K562 (cell line): ENCODE measurements at regions of chrX and their contacts with region 1.

Region 1: GRCh38 chrX:8815464-8816065 is 14.4 kb upstream of the FAM9A start:
- DNase-seq: peak; percentile 52 to 69 (median 60)
- ATAC-seq: peak; percentile 81
- H3K4me3 ChIP-seq: no peak overlapping the region
- H3K27ac ChIP-seq: no peak overlapping the region
- H3K4me1 ChIP-seq: no peaks in the 10 kb centered on the region
- H3K27me3 ChIP-seq: no peaks in the 10 kb centered on the region
- CTCF ChIP-seq: peak; percentile 54 to 63 (median 59); a peak in 5 of 6 replicates
- EP300 ChIP-seq: no peak
- POLR2A ChIP-seq: no peak
- RAD21 ChIP-seq: peak; percentile 36 to 48; a peak in 3 of 4 replicates

Region 2: GRCh38 chrX:7996414-7996813 is 819.2 kb before region 1 on chrX:
- CTCF ChIA-PET with region 1: no interaction called
- POLR2A ChIA-PET with region 1: no interaction called
- in situ Hi-C with region 1: no loop called
- intact Hi-C with region 1: loop called (anchors 1 kb)
- DNase-seq: peak; percentile 8 to 43 (median 12)
- ATAC-seq: peak; percentile 76
- H3K4me3 ChIP-seq: no peak overlapping the region
- H3K27ac ChIP-seq: no peak overlapping the region
- H3K4me1 ChIP-seq: no peaks in the 10 kb centered on the region
- H3K27me3 ChIP-seq: no peaks in the 10 kb centered on the region
- CTCF ChIP-seq: peak; percentile 27 to 64 (median 40); a peak in 3 of 6 replicates
- EP300 ChIP-seq: no peak
- POLR2A ChIP-seq: no peak
- RAD21 ChIP-seq: peak; percentile 55 to 60

Region 3: GRCh38 chrX:8738588-8739189 is 76.9 kb before region 1 on chrX:
- CTCF ChIA-PET with region 1: no interaction called
- POLR2A ChIA-PET with region 1: no interaction called
- in situ Hi-C with region 1: no loop called
- intact Hi-C with region 1: no loop called
- DNase-seq: peak; percentile 8 to 48 (median 9)
- ATAC-seq: peak; percentile 54; the same call in 2 of the 3 replicates
- H3K4me3 ChIP-seq: no peak overlapping the region
- H3K27ac ChIP-seq: no peak overlapping the region
- H3K4me1 ChIP-seq: no peaks in the 10 kb centered on the region
- H3K27me3 ChIP-seq: no peaks in the 10 kb centered on the region
- CTCF ChIP-seq: peak; percentile 51 to 64 (median 52)
- EP300 ChIP-seq: no peak
- POLR2A ChIP-seq: no peak
- RAD21 ChIP-seq: peak; percentile 49 to 62

Region 4: GRCh38 chrX:8748855-8749254 is 66.7 kb before region 1 on chrX:
- CTCF ChIA-PET with region 1: interaction called, 4 read pairs
- POLR2A ChIA-PET with region 1: no interaction called
- in situ Hi-C with region 1: no loop called
- intact Hi-C with region 1: loop called (anchors 1 kb)
- DNase-seq: peak; percentile 12 to 22 (median 16)
- ATAC-seq: peak; percentile 77
- H3K4me3 ChIP-seq: no peak overlapping the region
- H3K27ac ChIP-seq: no peak overlapping the region
- H3K4me1 ChIP-seq: no peaks in the 10 kb centered on the region
- H3K27me3 ChIP-seq: no peaks in the 10 kb centered on the region
- CTCF ChIP-seq: peak; percentile 35 to 43 (median 42); a peak in 3 of 6 replicates
- EP300 ChIP-seq: no peak
- POLR2A ChIP-seq: no peak
- RAD21 ChIP-seq: 0 out of 4 replicates have a peak, but pooled peaks of 1 of the 2 experiments have one; percentile 30

Region 5: DNA sequence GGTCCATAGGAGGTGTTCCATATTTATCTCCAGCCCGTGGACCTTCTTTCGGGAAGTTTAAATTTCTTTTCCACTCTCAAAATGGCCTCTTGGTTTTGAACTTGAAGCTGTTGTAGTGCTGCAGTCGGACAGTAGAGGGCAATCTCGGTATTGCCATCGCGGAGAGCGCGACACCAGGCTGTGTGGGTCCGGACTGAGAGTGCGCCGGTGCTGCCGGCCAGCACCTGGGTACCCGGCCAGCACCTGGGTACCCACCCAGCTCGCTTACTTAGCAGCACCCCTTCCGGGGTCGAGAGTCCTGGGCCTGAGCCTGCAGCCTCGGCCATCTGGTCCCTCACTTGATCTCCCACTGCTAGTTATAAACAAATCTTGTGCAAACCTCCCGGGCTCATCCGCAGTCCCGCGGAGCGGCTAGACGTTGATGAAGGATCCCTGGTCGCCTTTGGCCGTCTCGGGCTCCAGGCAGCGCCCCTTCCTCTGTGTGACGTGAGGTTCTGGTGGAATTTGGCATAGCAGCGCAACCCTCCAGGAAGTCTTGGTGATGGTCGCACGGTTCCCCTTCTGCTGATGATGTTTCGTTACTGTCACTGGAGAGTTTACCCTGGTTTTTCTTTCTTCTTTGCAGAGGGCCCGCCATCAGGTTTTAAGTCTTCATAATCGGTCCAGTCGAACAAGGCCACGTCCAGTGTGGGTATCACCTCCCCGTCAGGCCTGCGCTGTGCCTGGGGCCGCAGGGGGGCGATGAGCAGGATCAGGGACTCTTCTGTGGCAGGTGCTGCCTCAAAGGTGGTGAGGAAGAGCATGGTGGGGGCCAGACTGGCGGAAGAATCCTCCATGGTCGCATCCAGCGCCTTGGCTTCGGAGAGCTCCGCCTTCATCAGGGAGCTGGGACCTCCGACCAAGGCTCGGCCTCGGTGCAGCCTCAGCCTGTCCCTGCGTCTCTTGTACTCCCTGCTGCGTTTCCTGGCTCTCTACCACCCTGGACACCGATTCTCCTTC is 32.2 kb before region 1 on chrX:
- CTCF ChIA-PET with region 1: no interaction called
- POLR2A ChIA-PET with region 1: no interaction called
- in situ Hi-C with region 1: no loop called
- intact Hi-C with region 1: loop called (anchors 1 kb)
- DNase-seq: peak; percentile 22 to 52 (median 24)
- ATAC-seq: peak; percentile 92
- H3K4me3 ChIP-seq: no peak overlapping the region
- H3K27ac ChIP-seq: no peak overlapping the region
- H3K4me1 ChIP-seq: peaks cover 0 to 5% of the 10 kb centered on the region in 2 experiments; a peak in 2 of 5 replicates
- H3K27me3 ChIP-seq: no peaks in the 10 kb centered on the region; a peak in 1 of 5 replicates
- CTCF ChIP-seq: peak; percentile 59 to 74 (median 59)
- EP300 ChIP-seq: no peak
- POLR2A ChIP-seq: no peak
- RAD21 ChIP-seq: peak in 1 of 2 experiments; percentile 47; a peak in 3 of 4 replicates

Region 6: GRCh38 chrX:8841911-8842310 is 26.3 kb after region 1 on chrX:
- CTCF ChIA-PET with region 1: no interaction called
- POLR2A ChIA-PET with region 1: no interaction called
- in situ Hi-C with region 1: no loop called
- intact Hi-C with region 1: no loop called
- DNase-seq: no peak
- ATAC-seq: no peak
- H3K4me3 ChIP-seq: no peak overlapping the region
- H3K27ac ChIP-seq: no peak overlapping the region
- H3K4me1 ChIP-seq: no peaks in the 10 kb centered on the region
- H3K27me3 ChIP-seq: no peaks in the 10 kb centered on the region; a peak in 1 of 5 replicates
- CTCF ChIP-seq: no peak
- EP300 ChIP-seq: no peak
- POLR2A ChIP-seq: no peak
- RAD21 ChIP-seq: no peak

Region 7: GRCh38 chrX:9966775-9967408 is 1151.3 kb after region 1 on chrX and contains the start of gene CLDN34:
- CTCF ChIA-PET with region 1: interaction called, 3 read pairs
- POLR2A ChIA-PET with region 1: no interaction called
- in situ Hi-C with region 1: no loop called
- intact Hi-C with region 1: loop called (anchors 10 kb)
- DNase-seq: peak; percentile 10 to 31 (median 13)
- ATAC-seq: peak; percentile 51; the same call in 2 of the 3 replicates
- H3K4me3 ChIP-seq: no peak within 1 kb of the TSS
- H3K27ac ChIP-seq: no peak within 1 kb of the TSS
- H3K4me1 ChIP-seq: no peaks in the 10 kb centered on the region
- H3K27me3 ChIP-seq: peaks cover 0 to 10% of the 10 kb centered on the region in 2 experiments; a peak in 2 of 5 replicates
- CTCF ChIP-seq: peak; percentile 36 to 51 (median 44); a peak in 4 of 6 replicates
- EP300 ChIP-seq: no peak
- POLR2A ChIP-seq: no peak
- RAD21 ChIP-seq: peak; percentile 22 to 58; a peak in 2 of 4 replicates
- polyA plus RNA-seq, gene CLDN34: not detected

Region 8: DNA sequence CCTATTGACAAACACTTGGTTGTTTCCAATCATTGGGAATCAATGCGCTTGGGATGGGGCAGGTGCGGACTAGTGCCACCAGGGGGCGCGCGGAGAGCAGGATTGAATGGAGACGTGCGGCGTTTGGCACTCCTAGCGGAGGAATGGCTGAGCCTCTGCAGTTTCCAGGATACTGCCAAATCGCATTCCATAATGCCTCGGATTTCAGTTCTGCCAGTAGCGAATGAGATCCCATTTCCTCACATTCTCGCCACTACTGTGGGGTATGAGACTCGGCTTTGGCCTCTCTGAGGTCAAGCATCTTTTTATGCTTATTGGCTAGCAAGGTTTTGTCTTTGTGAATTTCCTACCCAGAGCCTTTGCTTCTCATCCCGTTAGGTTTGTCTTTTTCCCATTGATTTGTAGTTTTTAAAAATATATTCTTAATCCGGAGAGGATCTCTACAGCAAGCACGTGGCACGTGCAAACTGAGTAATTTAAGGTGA is 1180.3 kb after region 1 on chrX:
- CTCF ChIA-PET with region 1: no interaction called
- POLR2A ChIA-PET with region 1: no interaction called
- in situ Hi-C with region 1: no loop called
- intact Hi-C with region 1: loop called (anchors 10 kb)
- DNase-seq: peak; percentile 64 to 75 (median 70)
- ATAC-seq: peak; percentile 90
- H3K4me3 ChIP-seq: no peak overlapping the region
- H3K27ac ChIP-seq: no peak overlapping the region
- H3K4me1 ChIP-seq: no peaks in the 10 kb centered on the region
- H3K27me3 ChIP-seq: peaks cover 0 to 14% of the 10 kb centered on the region in 2 experiments; a peak in 2 of 5 replicates
- CTCF ChIP-seq: peak; percentile 87 to 100 (median 95)
- EP300 ChIP-seq: no peak
- POLR2A ChIP-seq: no peak
- RAD21 ChIP-seq: peak; percentile 83